ENCODE measurements at regions of chr20 and their contacts with region 1.

Region 1: GRCh38 chr20:6641012-6641411 is 126.5 kb upstream of the BMP2 start:
- DNase-seq: no peak
- H3K4me3 ChIP-seq: no peak overlapping the region
- H3K27ac ChIP-seq: no peak overlapping the region
- H3K4me1 ChIP-seq: no peaks in the 10 kb centered on the region
- H3K27me3 ChIP-seq: no peaks in the 10 kb centered on the region
- CTCF ChIP-seq: no peak
- EP300 ChIP-seq: no peak
- POLR2A ChIP-seq: no peak

Region 2: GRCh38 chr20:8187740-8188139 is 1546.7 kb after region 1 on chr20:
- intact Hi-C with region 1: loop called in 1 of 4 experiments (anchors 5 kb)
- DNase-seq: no peak
- H3K4me3 ChIP-seq: no peak overlapping the region
- H3K27ac ChIP-seq: no peak overlapping the region
- H3K4me1 ChIP-seq: no peaks in the 10 kb centered on the region
- H3K27me3 ChIP-seq: no peaks in the 10 kb centered on the region
- CTCF ChIP-seq: no peak
- EP300 ChIP-seq: no peak
- POLR2A ChIP-seq: no peak

Measured in ovary (tissue), 10 donors.